Panc1 (cell line): ENCODE measurements at regions of chr19 and their contacts with region 1.

Region 1: DNA sequence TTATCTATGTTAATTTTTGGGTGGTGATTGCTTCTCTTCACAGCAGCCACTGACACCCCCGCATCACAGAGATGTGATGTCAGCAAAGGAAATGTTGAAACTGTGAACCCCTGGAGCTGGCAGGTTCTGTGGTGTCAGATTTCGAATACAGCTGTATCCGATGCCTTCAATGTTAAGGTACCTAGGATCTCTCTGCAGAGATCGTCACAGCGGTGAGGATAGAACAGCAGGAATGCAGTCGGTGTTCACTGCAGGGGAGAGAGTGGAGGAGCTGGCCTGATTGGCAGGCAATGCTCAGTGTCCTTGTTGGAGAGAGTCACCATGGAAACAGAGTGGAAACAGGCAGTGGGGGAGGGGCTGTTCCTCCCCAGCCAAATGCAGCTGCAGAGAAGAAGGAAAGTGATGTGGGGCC is 79.5 kb upstream of the ZNF835 start:
- DNase-seq: no peak
- ATAC-seq: no peak
- H3K4me3 ChIP-seq: no peak overlapping the region
- H3K27ac ChIP-seq: no peak overlapping the region
- H3K4me1 ChIP-seq: no peaks in the 10 kb centered on the region
- H3K27me3 ChIP-seq: no peaks in the 10 kb centered on the region
- CTCF ChIP-seq: no peak

Region 2: DNA sequence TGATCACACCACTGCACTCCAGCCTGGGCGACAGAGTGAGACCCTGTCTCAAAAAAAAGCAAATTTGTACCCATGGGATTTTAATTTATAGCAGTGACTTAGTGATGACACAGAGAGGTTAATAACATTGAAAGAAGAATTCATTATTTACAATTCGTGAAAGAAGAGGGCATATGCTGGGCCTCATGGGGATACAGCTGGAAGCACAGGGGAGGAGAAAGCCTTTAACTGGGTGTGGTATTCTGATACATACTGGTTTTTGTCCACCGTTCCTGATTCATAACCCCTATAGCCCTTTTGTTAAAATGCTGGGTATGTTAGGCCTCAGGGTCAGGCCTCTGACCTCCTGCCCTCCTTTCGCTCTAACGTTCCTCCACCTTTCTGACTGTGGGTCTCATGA is 451.1 kb after region 1 on chr19:
- CTCF ChIA-PET with region 1: no interaction called
- POLR2A ChIA-PET with region 1: interaction called, 12 read pairs
- in situ Hi-C with region 1: no loop called
- intact Hi-C with region 1: no loop called
- DNase-seq: no peak
- ATAC-seq: no peak
- H3K4me3 ChIP-seq: no peak overlapping the region
- H3K27ac ChIP-seq: no peak overlapping the region
- H3K4me1 ChIP-seq: no peaks in the 10 kb centered on the region
- H3K27me3 ChIP-seq: no peaks in the 10 kb centered on the region
- CTCF ChIP-seq: no peak